ENCODE measurements at regions of chr18 and their contacts with region 1.

Region 1: DNA sequence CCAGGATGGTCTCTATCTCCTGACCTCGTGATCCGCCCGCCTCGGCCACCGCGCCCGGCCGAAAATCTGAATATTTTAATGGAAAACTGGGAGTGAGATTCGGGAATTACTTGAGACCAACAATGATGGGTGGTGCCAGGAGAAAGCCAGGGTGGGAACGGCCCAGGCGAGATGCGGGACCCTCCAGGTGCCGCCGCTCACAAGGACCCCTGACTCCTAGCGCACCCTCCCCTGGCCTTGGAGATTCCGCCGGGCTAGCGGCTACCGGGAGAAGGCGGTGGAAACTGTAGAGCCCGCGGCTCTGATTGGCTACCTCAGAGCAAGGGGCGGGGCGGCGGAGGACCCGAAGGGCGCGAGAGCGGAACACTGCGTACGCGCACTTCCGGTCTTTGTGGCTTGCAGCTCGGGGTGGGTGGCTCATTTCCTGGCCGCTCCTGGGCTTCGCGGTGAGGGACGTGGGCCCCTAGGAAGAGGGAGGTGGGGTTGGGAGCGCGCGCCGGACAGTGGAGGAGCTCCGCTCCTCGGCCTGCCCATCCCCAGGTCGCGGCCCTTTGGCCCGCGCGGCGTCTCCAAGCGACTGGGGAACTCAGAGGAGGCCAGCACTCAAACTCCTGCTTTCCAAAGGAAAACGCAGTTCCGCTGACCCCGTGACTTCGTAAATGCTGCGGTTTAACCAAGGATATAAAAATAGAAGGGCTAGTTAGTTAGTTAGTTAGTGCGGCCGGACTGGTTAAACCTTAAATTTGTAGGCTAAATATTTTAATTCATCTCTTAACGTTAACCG is at the start of gene ZNF397:
- DNase-seq: peak; percentile 95 to 97
- ATAC-seq: peak; percentile 96 to 99 (median 98)
- H3K4me3 ChIP-seq: peak within 1 kb of the TSS; percentile 60
- H3K4me3 Mint-ChIP-seq: peak within 1 kb of the TSS; percentile 97
- H3K27ac ChIP-seq: peak within 1 kb of the TSS; percentile 83
- H3K27ac Mint-ChIP-seq: peak within 1 kb of the TSS; percentile 97 to 98
- H3K4me1 ChIP-seq: peaks cover 4% of the 10 kb centered on the region
- H3K4me1 Mint-ChIP-seq: peaks cover 25 to 28% of the 10 kb centered on the region in 2 donors
- H3K27me3 ChIP-seq: no peaks in the 10 kb centered on the region
- H3K27me3 Mint-ChIP-seq: no peaks in the 10 kb centered on the region
- CTCF ChIP-seq: no peak
- total RNA-seq, gene ZNF397: 8.7 to 15.6 (median 13.9) TPM

Region 2: GRCh38 chr18:34866739-34867138 is 374.1 kb before region 1 on chr18:
- intact Hi-C with region 1: loop called (anchors 2 kb)
- DNase-seq: peak in 1 of 2 donors; percentile 6
- ATAC-seq: no peak
- H3K4me3 ChIP-seq: no peak overlapping the region
- H3K4me3 Mint-ChIP-seq: no peak overlapping the region
- H3K27ac ChIP-seq: no peak overlapping the region
- H3K27ac Mint-ChIP-seq: no peak overlapping the region
- H3K4me1 ChIP-seq: peaks cover 4% of the 10 kb centered on the region
- H3K4me1 Mint-ChIP-seq: peaks cover under 1 to 6% of the 10 kb centered on the region in 2 donors
- H3K27me3 ChIP-seq: peaks cover 3% of the 10 kb centered on the region
- H3K27me3 Mint-ChIP-seq: peaks cover 6 to 8% of the 10 kb centered on the region in 2 donors
- CTCF ChIP-seq: peak; percentile 32

Region 3: GRCh38 chr18:35029770-35030169 is 211.1 kb before region 1 on chr18:
- intact Hi-C with region 1: loop called (anchors 5 kb)
- DNase-seq: peak in 1 of 2 donors; percentile 71
- ATAC-seq: peak; percentile 74 to 87 (median 77)
- H3K4me3 ChIP-seq: peak overlapping the region; percentile 44
- H3K4me3 Mint-ChIP-seq: peak overlapping the region; percentile 94
- H3K27ac ChIP-seq: peak overlapping the region; percentile 90
- H3K27ac Mint-ChIP-seq: peak overlapping the region; percentile 95
- H3K4me1 ChIP-seq: peaks cover 15% of the 10 kb centered on the region
- H3K4me1 Mint-ChIP-seq: peaks cover 51 to 56% of the 10 kb centered on the region in 2 donors
- H3K27me3 ChIP-seq: no peaks in the 10 kb centered on the region
- H3K27me3 Mint-ChIP-seq: no peaks in the 10 kb centered on the region
- CTCF ChIP-seq: peak; percentile 48

Region 4: GRCh38 chr18:35141567-35142274 is 99.1 kb before region 1 on chr18:
- intact Hi-C with region 1: no loop called
- DNase-seq: no peak
- ATAC-seq: no peak
- H3K4me3 ChIP-seq: no peak overlapping the region
- H3K4me3 Mint-ChIP-seq: no peak overlapping the region
- H3K27ac ChIP-seq: no peak overlapping the region
- H3K27ac Mint-ChIP-seq: peak overlapping the region; percentile 79 to 82
- H3K4me1 ChIP-seq: peaks cover 4% of the 10 kb centered on the region
- H3K4me1 Mint-ChIP-seq: peaks cover 35% of the 10 kb centered on the region in 2 donors
- H3K27me3 ChIP-seq: no peaks in the 10 kb centered on the region
- H3K27me3 Mint-ChIP-seq: no peaks in the 10 kb centered on the region
- CTCF ChIP-seq: no peak

Region 5: GRCh38 chr18:35227254-35227653 is 13.6 kb before region 1 on chr18:
- intact Hi-C with region 1: no loop called
- DNase-seq: peak in 1 of 2 donors; percentile 6
- ATAC-seq: no peak
- H3K4me3 ChIP-seq: no peak overlapping the region
- H3K4me3 Mint-ChIP-seq: no peak overlapping the region
- H3K27ac ChIP-seq: no peak overlapping the region
- H3K27ac Mint-ChIP-seq: no peak overlapping the region
- H3K4me1 ChIP-seq: no peaks in the 10 kb centered on the region
- H3K4me1 Mint-ChIP-seq: peaks cover 4 to 5% of the 10 kb centered on the region in 2 donors
- H3K27me3 ChIP-seq: no peaks in the 10 kb centered on the region
- H3K27me3 Mint-ChIP-seq: peaks cover 0 to 2% of the 10 kb centered on the region in 2 donors
- CTCF ChIP-seq: no peak

Region 6: DNA sequence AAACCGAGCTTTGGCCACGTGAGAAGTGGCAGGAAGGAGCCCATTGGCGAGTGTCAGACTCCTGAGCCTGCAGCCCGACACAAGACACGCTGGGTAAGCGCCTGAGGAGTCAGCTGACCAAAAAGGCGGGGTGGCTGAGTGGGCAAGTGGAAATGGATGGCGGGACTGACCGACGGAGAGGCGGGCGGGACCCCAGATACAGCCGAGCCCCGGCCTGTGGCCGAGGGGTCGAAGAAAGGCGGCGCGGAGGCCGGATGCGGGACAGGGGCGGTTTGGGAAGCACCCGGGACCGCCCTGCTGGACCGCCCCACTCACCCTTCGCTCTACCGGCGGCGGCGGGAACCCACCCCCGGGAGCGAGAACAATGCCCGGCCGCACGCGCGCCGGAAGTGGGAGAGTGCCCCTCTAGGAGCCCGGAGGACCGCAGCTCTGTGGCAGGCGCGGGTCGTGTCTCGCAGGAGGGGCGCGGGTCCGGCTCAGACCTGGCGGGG is 26.4 kb after region 1 on chr18:
- intact Hi-C with region 1: loop called (anchors 1 kb)
- DNase-seq: peak; percentile 61 to 82
- ATAC-seq: peak; percentile 77 to 85 (median 84)
- H3K4me3 ChIP-seq: peak overlapping the region; percentile 88
- H3K4me3 Mint-ChIP-seq: peak overlapping the region; percentile 97
- H3K27ac ChIP-seq: peak overlapping the region; percentile 94
- H3K27ac Mint-ChIP-seq: peak overlapping the region; percentile 91 to 98
- H3K4me1 ChIP-seq: peaks cover 18% of the 10 kb centered on the region
- H3K4me1 Mint-ChIP-seq: peaks cover 23 to 33% of the 10 kb centered on the region in 2 donors
- H3K27me3 ChIP-seq: no peaks in the 10 kb centered on the region
- H3K27me3 Mint-ChIP-seq: no peaks in the 10 kb centered on the region
- CTCF ChIP-seq: no peak

Region 7: DNA sequence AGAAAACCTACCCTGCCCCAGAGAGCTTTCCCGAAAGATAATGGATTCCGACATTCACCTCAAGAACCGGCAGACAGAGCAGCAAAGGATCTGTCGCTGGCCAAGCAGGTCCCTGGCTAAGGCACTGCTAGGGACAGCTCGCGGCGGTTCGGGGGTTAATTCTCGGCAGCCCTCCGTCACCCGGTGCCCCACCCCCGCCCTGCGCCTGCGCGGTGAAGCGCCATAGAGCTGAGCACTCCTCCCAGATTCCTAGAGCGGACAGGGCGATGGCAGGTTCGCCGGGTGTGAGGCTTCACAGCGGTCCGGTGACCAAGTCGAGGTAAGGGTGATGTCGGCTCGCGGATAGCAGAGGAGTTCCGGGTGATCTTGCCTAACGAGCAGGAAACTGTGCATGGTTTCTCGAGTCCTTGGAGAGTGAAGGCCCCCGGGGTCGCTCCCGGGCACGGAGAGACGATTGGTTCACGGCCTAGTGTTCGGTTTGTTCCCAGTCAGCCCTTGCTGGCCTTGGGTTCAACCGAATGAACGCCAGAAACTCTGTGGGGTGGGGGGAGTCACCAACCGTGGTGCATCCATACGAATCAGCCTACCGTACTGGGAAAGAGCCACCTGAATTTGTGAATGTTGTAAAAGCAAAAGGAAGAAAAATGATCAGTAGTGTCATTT is 49.3 kb after region 1 on chr18 and contains the start of gene ZSCAN30:
- intact Hi-C with region 1: loop called (anchors 1 kb)
- DNase-seq: peak; percentile 95 to 97
- ATAC-seq: peak; percentile 93 to 99 (median 96)
- H3K4me3 ChIP-seq: peak within 1 kb of the TSS; percentile 61
- H3K4me3 Mint-ChIP-seq: peak within 1 kb of the TSS; percentile 99
- H3K27ac ChIP-seq: peak within 1 kb of the TSS; percentile 75
- H3K27ac Mint-ChIP-seq: peak within 1 kb of the TSS; percentile 97 to 98
- H3K4me1 ChIP-seq: peaks cover 17% of the 10 kb centered on the region
- H3K4me1 Mint-ChIP-seq: peaks cover 56 to 61% of the 10 kb centered on the region in 2 donors
- H3K27me3 ChIP-seq: no peaks in the 10 kb centered on the region
- H3K27me3 Mint-ChIP-seq: no peaks in the 10 kb centered on the region
- CTCF ChIP-seq: no peak
- total RNA-seq, gene ZSCAN30: 15.4 to 21.0 (median 16.4) TPM

Region 8: GRCh38 chr18:35549564-35549963 is 308.7 kb after region 1 on chr18:
- intact Hi-C with region 1: no loop called
- DNase-seq: no peak
- ATAC-seq: no peak
- H3K4me3 ChIP-seq: no peak overlapping the region
- H3K4me3 Mint-ChIP-seq: no peak overlapping the region
- H3K27ac ChIP-seq: no peak overlapping the region
- H3K27ac Mint-ChIP-seq: no peak overlapping the region
- H3K4me1 ChIP-seq: no peaks in the 10 kb centered on the region
- H3K4me1 Mint-ChIP-seq: no peaks in the 10 kb centered on the region
- H3K27me3 ChIP-seq: no peaks in the 10 kb centered on the region
- H3K27me3 Mint-ChIP-seq: peaks cover 13 to 26% of the 10 kb centered on the region in 2 donors
- CTCF ChIP-seq: no peak

Measured in natural killer cell (primary cell).